Uterus (tissue), 4 donors: ENCODE measurements at regions of chr5 and their contacts with region 1.

Region 1: GRCh38 chr5:79837761-79838605 is 148.3 kb downstream of the CMYA5 start:
- DNase-seq: peak; percentile 88 to 89
- H3K4me3 ChIP-seq: no peak overlapping the region
- H3K27ac ChIP-seq: peak overlapping the region; percentile 67 to 73
- H3K4me1 ChIP-seq: peaks cover 0 to 6% of the 10 kb centered on the region in 2 donors
- H3K27me3 ChIP-seq: no peaks in the 10 kb centered on the region
- CTCF ChIP-seq: no peak
- POLR2A ChIP-seq: no peak

Region 2: GRCh38 chr5:79636981-79637733 is 200.8 kb before region 1 on chr5:
- intact Hi-C with region 1: no loop called
- DNase-seq: no peak
- H3K4me3 ChIP-seq: no peak overlapping the region
- H3K27ac ChIP-seq: no peak overlapping the region
- H3K4me1 ChIP-seq: no peaks in the 10 kb centered on the region
- H3K27me3 ChIP-seq: no peaks in the 10 kb centered on the region
- CTCF ChIP-seq: no peak
- POLR2A ChIP-seq: no peak

Region 3: GRCh38 chr5:79689541-79690466 is 148.2 kb before region 1 on chr5 and contains the start of gene CMYA5:
- intact Hi-C with region 1: loop called (anchors 10 kb)
- DNase-seq: peak; percentile 67 to 74
- H3K4me3 ChIP-seq: peak within 1 kb of the TSS; percentile 55 to 65
- H3K27ac ChIP-seq: peak within 1 kb of the TSS; percentile 95
- H3K4me1 ChIP-seq: peaks cover 0 to 6% of the 10 kb centered on the region in 2 donors
- H3K27me3 ChIP-seq: no peaks in the 10 kb centered on the region
- CTCF ChIP-seq: no peak
- POLR2A ChIP-seq: peak in 1 of 2 donors; percentile 24
- total RNA-seq, gene CMYA5: 15.8 to 49.4 (median 27.0) TPM

Region 4: DNA sequence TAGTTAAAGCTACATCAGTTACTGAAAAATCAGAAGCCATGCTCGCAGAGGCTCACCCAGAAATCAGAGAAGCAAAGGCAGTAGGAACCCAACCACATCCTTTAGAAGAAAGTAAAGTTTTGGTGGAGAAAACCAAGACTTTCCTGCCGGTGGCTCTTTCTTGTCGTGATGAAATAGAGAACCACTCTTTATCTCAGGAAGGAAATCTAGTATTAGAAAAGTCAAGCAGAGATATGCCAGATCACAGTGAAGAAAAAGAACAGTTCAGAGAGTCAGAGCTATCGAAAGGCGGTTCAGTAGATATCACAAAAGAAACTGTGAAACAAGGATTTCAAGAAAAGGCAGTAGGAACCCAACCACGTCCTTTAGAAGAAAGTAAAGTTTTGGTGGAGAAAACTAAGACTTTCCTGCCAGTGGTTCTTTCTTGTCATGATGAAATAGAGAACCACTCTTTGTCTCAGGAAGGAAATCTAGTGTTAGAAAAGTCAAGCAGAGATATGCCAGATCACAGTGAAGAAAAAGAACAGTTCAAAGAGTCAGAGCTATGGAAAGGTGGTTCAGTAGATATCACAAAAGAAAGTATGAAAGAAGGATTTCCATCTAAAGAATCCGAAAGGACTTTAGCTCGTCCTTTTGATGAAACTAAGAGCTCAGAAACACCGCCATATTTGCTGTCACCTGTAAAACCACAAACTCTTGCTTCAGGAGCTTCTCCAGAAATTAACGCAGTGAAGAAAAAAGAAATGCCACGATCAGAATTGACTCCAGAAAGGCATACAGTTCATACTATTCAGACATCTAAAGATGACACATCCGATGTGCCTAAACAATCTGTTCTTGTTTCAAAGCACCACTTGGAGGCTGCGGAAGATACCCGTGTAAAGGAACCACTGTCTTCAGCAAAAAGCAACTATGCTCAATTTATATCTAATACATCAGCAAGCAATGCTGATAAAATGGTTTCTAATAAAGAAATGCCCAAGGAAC is 101.2 kb before region 1 on chr5:
- intact Hi-C with region 1: no loop called
- DNase-seq: no peak
- H3K4me3 ChIP-seq: no peak overlapping the region
- H3K27ac ChIP-seq: no peak overlapping the region
- H3K4me1 ChIP-seq: no peaks in the 10 kb centered on the region
- H3K27me3 ChIP-seq: no peaks in the 10 kb centered on the region
- CTCF ChIP-seq: no peak
- POLR2A ChIP-seq: no peak

Region 5: GRCh38 chr5:79762929-79763328 is 75.1 kb before region 1 on chr5:
- intact Hi-C with region 1: no loop called
- DNase-seq: no peak
- H3K4me3 ChIP-seq: no peak overlapping the region
- H3K27ac ChIP-seq: no peak overlapping the region
- H3K4me1 ChIP-seq: no peaks in the 10 kb centered on the region
- H3K27me3 ChIP-seq: no peaks in the 10 kb centered on the region
- CTCF ChIP-seq: no peak
- POLR2A ChIP-seq: no peak

Region 6: DNA sequence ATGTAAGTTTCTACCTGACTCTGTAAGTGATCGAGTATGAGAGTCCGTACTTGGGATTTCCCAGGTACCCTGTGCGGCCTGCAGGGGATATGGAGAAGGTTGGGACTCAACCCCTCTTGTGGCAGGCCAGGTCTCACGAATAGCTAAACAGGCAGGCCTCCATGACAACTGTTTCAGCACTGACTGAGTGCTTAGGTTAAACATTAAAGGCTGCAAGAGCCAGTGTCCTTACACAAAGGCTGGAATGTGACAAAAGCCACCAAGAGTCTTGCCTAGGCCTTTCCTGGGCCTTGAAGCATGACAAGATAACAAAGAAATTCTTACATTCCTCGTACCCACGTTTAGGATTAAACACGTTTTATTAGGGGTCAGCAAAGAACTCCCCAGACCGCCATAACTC is 255.8 kb after region 1 on chr5:
- intact Hi-C with region 1: no loop called
- DNase-seq: no peak
- H3K4me3 ChIP-seq: no peak overlapping the region
- H3K27ac ChIP-seq: no peak overlapping the region
- H3K4me1 ChIP-seq: no peaks in the 10 kb centered on the region
- H3K27me3 ChIP-seq: no peaks in the 10 kb centered on the region
- CTCF ChIP-seq: no peak
- POLR2A ChIP-seq: no peak